A549 (cell line): ENCODE measurements at regions of chr9 and their contacts with region 1.

Region 1: GRCh38 chr9:93154315-93154903 is 20.4 kb upstream of the NINJ1 start:
- DNase-seq: peak; percentile 47 to 76
- ATAC-seq: peak; percentile 71 to 86
- H3K4me3 ChIP-seq: no peak overlapping the region
- H3K27ac ChIP-seq: no peak overlapping the region
- H3K4me1 ChIP-seq: peaks cover under 1% of the 10 kb centered on the region; the same call in 1 of the 3 replicates
- CTCF ChIP-seq: peak; percentile 46
- EP300 ChIP-seq: no peak
- POLR2A ChIP-seq: no peak
- RAD21 ChIP-seq: peak; percentile 24 to 51; a peak in 2 of 5 replicates

Region 2: DNA sequence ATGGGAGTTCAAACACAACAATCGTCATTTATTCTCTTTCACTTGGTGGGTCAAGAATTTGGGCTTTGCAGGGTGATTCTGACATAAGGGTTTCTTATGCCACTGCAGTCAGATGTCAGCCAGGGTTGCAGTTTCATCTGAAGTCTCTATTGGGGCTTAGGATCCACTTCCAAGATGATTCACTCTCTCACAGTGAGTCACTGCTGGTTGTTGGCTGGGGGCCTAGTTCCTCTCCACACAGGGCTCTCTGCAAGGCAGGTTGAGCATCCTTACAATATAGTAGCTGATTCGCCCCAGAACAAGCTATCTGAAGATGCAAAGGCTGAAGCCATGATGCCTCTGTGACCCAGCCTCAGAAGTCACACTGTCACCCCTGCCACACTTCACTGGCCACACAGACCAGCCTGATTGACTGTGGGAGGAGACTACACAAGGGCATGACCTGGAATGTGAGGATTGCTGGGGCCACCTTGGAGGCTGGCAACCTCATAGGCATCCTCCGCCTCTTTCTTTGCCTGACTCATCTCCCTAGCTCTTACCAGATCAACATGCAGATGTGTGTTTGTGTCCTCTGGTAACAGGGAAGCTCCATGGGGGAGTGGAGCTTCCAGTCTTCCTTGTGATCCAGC is 62.8 kb before region 1 on chr9:
- CTCF ChIA-PET with region 1: no interaction called
- POLR2A ChIA-PET with region 1: no interaction called
- DNase-seq: peak; percentile 56 to 77
- ATAC-seq: peak; percentile 11 to 46; a peak in 5 of 6 replicates
- H3K4me3 ChIP-seq: no peak overlapping the region
- H3K27ac ChIP-seq: peak overlapping the region; percentile 68 to 70; a peak in 5 of 6 replicates
- H3K4me1 ChIP-seq: peaks cover 38% of the 10 kb centered on the region
- CTCF ChIP-seq: no peak
- EP300 ChIP-seq: no peak
- POLR2A ChIP-seq: no peak
- RAD21 ChIP-seq: no peak

Region 3: GRCh38 chr9:93134015-93134739 is 20.2 kb before region 1 on chr9 and contains the start of gene NINJ1:
- CTCF ChIA-PET with region 1: interaction called, 15 read pairs
- POLR2A ChIA-PET with region 1: interaction called, 3 read pairs
- DNase-seq: peak; percentile 56 to 90
- ATAC-seq: peak; percentile 74 to 85
- H3K4me3 ChIP-seq: peak within 1 kb of the TSS; percentile 89
- H3K27ac ChIP-seq: peak within 1 kb of the TSS; percentile 91 to 96
- H3K4me1 ChIP-seq: peaks cover 46% of the 10 kb centered on the region
- CTCF ChIP-seq: no peak
- EP300 ChIP-seq: no peak
- POLR2A ChIP-seq: peak; percentile 73
- RAD21 ChIP-seq: no peak
- polyA plus RNA-seq, gene NINJ1: 27.0 and 37.9 TPM in 2 replicates

Region 4: DNA sequence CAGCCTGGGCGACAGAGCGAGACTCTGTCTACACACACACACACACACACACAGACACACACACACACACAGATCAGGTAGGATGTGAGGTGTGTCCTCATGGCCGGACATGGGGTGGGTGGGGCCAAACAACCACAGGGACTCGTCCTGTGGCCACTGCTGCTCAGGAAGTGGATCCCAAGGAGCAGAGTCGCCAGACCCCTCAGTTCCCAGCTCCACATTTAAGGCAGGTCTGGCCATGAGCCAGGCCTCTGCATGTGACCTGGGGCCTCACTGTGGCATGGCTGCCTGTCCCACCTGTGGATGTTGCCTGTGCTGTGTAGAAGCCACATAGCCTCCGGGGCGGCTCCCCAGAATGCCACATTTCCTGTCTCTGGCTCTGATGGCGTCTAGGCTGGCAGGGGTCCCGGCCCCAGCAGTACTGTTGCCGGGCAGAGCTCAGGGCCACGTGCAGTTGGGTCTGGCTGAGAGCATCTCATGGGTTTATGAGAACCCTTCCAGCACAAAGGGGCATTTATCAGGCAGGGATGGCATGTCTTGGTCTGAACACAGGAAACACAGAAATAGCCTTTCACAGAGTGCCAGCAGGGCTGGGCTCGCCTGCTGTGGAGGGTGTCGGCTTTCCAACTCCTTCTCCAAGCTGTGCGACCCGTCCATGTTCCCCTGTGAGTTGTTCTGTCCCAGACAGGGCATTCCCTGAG is 10.4 kb before region 1 on chr9:
- CTCF ChIA-PET with region 1: interaction called, 15 read pairs
- POLR2A ChIA-PET with region 1: no interaction called
- DNase-seq: no peak
- ATAC-seq: peak in 1 of 2 experiments; percentile 49; a peak in 3 of 6 replicates
- H3K4me3 ChIP-seq: no peak overlapping the region
- H3K27ac ChIP-seq: no peak overlapping the region
- H3K4me1 ChIP-seq: no peaks in the 10 kb centered on the region
- CTCF ChIP-seq: no peak
- EP300 ChIP-seq: no peak
- POLR2A ChIP-seq: no peak
- RAD21 ChIP-seq: no peak

Region 5: GRCh38 chr9:93166699-93167098 is 12.3 kb after region 1 on chr9:
- CTCF ChIA-PET with region 1: interaction called, 22 read pairs
- POLR2A ChIA-PET with region 1: no interaction called
- DNase-seq: no peak
- ATAC-seq: no peak
- H3K4me3 ChIP-seq: no peak overlapping the region
- H3K27ac ChIP-seq: no peak overlapping the region
- H3K4me1 ChIP-seq: no peaks in the 10 kb centered on the region
- CTCF ChIP-seq: no peak
- EP300 ChIP-seq: no peak
- POLR2A ChIP-seq: no peak
- RAD21 ChIP-seq: no peak

Region 6: DNA sequence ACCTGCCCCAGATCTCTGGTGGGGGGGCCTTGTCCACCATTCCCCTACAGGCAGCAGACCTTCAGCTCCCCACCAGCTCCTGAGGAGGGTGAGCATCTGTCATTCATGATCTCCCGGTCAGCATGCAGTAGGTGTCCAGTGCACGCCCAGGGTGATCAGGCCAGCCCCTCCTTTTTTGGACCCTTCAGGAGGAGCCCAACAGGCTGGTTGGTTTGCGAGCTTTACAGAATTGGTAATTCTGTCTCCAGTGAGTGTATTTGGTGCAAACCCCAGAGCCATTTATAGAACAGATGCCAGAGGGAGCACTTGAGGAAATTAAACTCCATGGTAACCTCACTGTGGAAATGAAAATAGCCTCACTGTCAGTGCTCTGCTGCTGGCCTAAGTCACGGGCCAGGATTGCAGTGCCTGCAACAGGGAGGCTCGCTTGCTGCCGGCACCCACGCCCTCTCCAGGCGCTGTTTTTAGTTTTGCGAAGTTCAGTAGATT is 53.0 kb after region 1 on chr9:
- CTCF ChIA-PET with region 1: no interaction called
- POLR2A ChIA-PET with region 1: no interaction called
- DNase-seq: no peak
- ATAC-seq: no peak; a peak in 1 of 6 replicates
- H3K4me3 ChIP-seq: no peak overlapping the region
- H3K27ac ChIP-seq: no peak overlapping the region
- H3K4me1 ChIP-seq: no peaks in the 10 kb centered on the region
- CTCF ChIP-seq: no peak
- EP300 ChIP-seq: no peak
- POLR2A ChIP-seq: no peak
- RAD21 ChIP-seq: no peak